ENCODE measurements at regions of chr4 and their contacts with region 1.

Region 1: GRCh38 chr4:162645381-162645780 is 481.6 kb upstream of the FSTL5 start:
- DNase-seq: no peak
- ATAC-seq: peak; percentile 41

Region 2: GRCh38 chr4:162560073-162560472 is 85.3 kb before region 1 on chr4:
- intact Hi-C with region 1: no loop called
- DNase-seq: no peak
- ATAC-seq: no peak

Region 3: GRCh38 chr4:163042306-163042705 is 396.9 kb after region 1 on chr4:
- intact Hi-C with region 1: loop called (anchors 10 kb)
- DNase-seq: no peak
- ATAC-seq: no peak

Region 4: GRCh38 chr4:163121689-163122088 is 476.3 kb after region 1 on chr4:
- intact Hi-C with region 1: no loop called
- DNase-seq: no peak
- ATAC-seq: no peak

Region 5: GRCh38 chr4:163332500-163333406 is 687.4 kb after region 1 on chr4 and contains the start of gene NPY1R:
- intact Hi-C with region 1: loop called (anchors 10 kb)
- DNase-seq: peak; percentile 58
- ATAC-seq: peak; percentile 97
- total RNA-seq, gene NPY1R: 0.69 TPM

Measured in left ventricle myocardium superior (tissue), 1 donor.